ENCODE measurements at regions of chr9 and their contacts with region 1.

Region 1: DNA sequence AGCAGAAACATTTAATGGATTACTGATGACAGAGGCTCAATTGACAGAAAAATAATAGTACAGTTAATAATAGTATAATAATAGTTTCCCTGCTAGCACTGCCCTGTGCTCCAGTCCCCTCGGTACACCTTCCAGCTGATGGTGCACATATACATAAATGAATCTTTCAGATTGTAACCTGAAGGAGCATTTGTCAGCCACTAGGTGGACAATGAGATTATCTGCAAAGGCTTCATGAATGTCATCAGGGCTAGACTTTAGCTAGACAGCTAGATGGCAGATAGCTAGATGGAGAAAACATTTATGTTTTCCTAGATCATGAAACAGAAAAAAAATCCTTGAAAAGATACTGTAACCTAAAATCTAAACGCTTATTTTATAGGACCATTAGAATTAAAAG is 304.4 kb upstream of the SMC2 start:
- DNase-seq: no peak
- ATAC-seq: no peak
- H3K4me3 ChIP-seq: no peak overlapping the region
- H3K27ac ChIP-seq: no peak overlapping the region
- H3K4me1 ChIP-seq: no peaks in the 10 kb centered on the region
- H3K27me3 ChIP-seq: no peaks in the 10 kb centered on the region
- CTCF ChIP-seq: peak in 2 of 3 experiments; percentile 4 to 33; a peak in 2 of 6 replicates
- POLR2A ChIP-seq: no peak
- RAD21 ChIP-seq: 0 out of 2 replicates have a peak, but pooled peaks have one; percentile 6

Region 2: DNA sequence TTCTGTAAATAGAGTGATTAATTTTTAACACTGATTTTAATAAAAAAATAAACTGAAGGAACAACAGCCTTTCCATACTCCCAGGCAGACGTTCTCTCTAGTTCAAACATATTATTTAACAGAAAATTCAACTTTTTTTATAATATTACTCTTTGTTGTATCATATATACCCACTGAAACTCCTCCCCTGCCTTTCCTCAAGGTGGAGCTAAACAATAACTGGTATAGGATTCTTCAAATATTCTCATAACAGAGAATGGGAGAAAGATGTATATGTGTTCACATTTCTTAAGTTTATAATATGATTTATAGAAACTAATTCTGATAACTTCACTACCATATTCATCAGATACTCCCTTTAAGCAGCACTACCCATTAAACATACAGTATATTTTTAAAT is 711.1 kb before region 1 on chr9:
- CTCF ChIA-PET with region 1: no interaction called
- POLR2A ChIA-PET with region 1: no interaction called
- RAD21 ChIA-PET with region 1: no interaction called
- intact Hi-C with region 1: no loop called
- DNase-seq: no peak
- ATAC-seq: no peak
- H3K4me3 ChIP-seq: no peak overlapping the region
- H3K27ac ChIP-seq: no peak overlapping the region
- H3K4me1 ChIP-seq: no peaks in the 10 kb centered on the region
- H3K27me3 ChIP-seq: no peaks in the 10 kb centered on the region
- CTCF ChIP-seq: no peak
- POLR2A ChIP-seq: no peak
- RAD21 ChIP-seq: no peak

Region 3: GRCh38 chr9:103761466-103761865 is 28.2 kb before region 1 on chr9:
- CTCF ChIA-PET with region 1: no interaction called
- POLR2A ChIA-PET with region 1: no interaction called
- RAD21 ChIA-PET with region 1: no interaction called
- intact Hi-C with region 1: no loop called
- DNase-seq: no peak
- ATAC-seq: no peak
- H3K4me3 ChIP-seq: no peak overlapping the region
- H3K27ac ChIP-seq: no peak overlapping the region
- H3K4me1 ChIP-seq: no peaks in the 10 kb centered on the region
- H3K27me3 ChIP-seq: no peaks in the 10 kb centered on the region
- CTCF ChIP-seq: no peak
- POLR2A ChIP-seq: no peak
- RAD21 ChIP-seq: no peak

Region 4: DNA sequence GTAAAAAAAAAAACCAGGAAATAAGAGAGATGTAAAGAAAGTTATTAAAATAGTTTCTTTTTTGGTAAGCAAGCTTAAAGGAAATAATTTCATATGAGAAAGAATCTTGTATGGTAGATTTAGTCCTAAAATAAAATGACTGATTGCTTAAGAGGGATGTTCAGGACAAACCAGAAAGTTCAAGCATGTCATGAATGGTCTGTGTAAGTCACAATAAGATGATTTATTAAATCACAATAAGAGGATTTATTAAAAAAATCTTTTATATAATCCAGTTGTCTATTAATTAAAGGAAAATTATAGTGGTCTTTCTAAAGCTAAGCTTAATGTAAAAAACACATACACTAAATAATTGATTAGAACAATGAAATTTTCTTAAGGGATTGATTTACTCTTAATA is 622.6 kb after region 1 on chr9:
- CTCF ChIA-PET with region 1: no interaction called
- POLR2A ChIA-PET with region 1: no interaction called
- RAD21 ChIA-PET with region 1: no interaction called
- intact Hi-C with region 1: loop called (anchors 10 kb)
- DNase-seq: peak; percentile 1
- ATAC-seq: no peak
- H3K4me3 ChIP-seq: no peak overlapping the region
- H3K27ac ChIP-seq: no peak overlapping the region
- H3K4me1 ChIP-seq: no peaks in the 10 kb centered on the region
- H3K27me3 ChIP-seq: no peaks in the 10 kb centered on the region
- CTCF ChIP-seq: no peak
- POLR2A ChIP-seq: no peak
- RAD21 ChIP-seq: no peak